Activated naive CD4-positive, alpha-beta T cell treated with anti-CD3 and anti-CD28 coated beads for 36 hours (primary cell): ENCODE measurements at regions of chr4 and their contacts with region 1.

Region 1: GRCh38 chr4:150297861-150298474 is 219.7 kb downstream of the DCLK2 start:
- DNase-seq: peak; percentile 68
- H3K4me3 Mint-ChIP-seq: no peak overlapping the region
- H3K27ac Mint-ChIP-seq: no peak overlapping the region
- H3K4me1 Mint-ChIP-seq: peaks cover 14% of the 10 kb centered on the region
- H3K27me3 Mint-ChIP-seq: no peaks in the 10 kb centered on the region

Region 2: GRCh38 chr4:150436598-150437370 is 138.8 kb after region 1 on chr4:
- CTCF ChIA-PET with region 1: no interaction called
- intact Hi-C with region 1: loop called (anchors 1 kb)
- DNase-seq: peak; percentile 42
- H3K4me3 Mint-ChIP-seq: no peak overlapping the region
- H3K27ac Mint-ChIP-seq: peak overlapping the region; percentile 66
- H3K4me1 Mint-ChIP-seq: peaks cover 15% of the 10 kb centered on the region
- H3K27me3 Mint-ChIP-seq: no peaks in the 10 kb centered on the region

Region 3: DNA sequence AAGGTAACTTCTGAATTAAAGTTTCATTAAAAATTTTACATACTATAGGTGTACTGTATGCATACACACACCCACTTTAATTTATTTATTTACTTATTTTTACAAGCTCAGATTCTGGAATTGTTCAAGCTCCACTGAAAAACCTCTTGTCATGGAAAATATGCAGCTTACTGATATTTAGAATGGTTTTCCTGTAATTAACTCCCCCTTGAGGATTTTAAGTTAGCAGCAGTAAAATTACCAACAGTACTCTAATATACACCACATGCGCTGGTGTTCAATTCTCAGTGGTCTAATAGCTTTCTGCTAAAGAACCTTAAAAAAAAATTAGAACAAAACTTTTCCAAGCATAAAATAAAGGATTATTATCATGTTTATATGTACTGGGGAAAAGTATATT is 296.0 kb after region 1 on chr4:
- CTCF ChIA-PET with region 1: interaction called, 3 read pairs
- intact Hi-C with region 1: loop called (anchors 2 kb)
- DNase-seq: no peak
- H3K4me3 Mint-ChIP-seq: no peak overlapping the region
- H3K27ac Mint-ChIP-seq: no peak overlapping the region
- H3K4me1 Mint-ChIP-seq: no peaks in the 10 kb centered on the region
- H3K27me3 Mint-ChIP-seq: no peaks in the 10 kb centered on the region